ENCODE measurements at regions of chr3 and their contacts with region 1.

Region 1: GRCh38 chr3:189071441-189071840 is 100.3 kb upstream of the TPRG1 start:
- DNase-seq: peak; percentile 20
- ATAC-seq: peak; percentile 62
- H3K4me3 ChIP-seq: no peak overlapping the region
- H3K27ac ChIP-seq: no peak overlapping the region
- H3K4me1 ChIP-seq: no peaks in the 10 kb centered on the region
- H3K27me3 ChIP-seq: no peaks in the 10 kb centered on the region
- CTCF ChIP-seq: no peak

Region 2: DNA sequence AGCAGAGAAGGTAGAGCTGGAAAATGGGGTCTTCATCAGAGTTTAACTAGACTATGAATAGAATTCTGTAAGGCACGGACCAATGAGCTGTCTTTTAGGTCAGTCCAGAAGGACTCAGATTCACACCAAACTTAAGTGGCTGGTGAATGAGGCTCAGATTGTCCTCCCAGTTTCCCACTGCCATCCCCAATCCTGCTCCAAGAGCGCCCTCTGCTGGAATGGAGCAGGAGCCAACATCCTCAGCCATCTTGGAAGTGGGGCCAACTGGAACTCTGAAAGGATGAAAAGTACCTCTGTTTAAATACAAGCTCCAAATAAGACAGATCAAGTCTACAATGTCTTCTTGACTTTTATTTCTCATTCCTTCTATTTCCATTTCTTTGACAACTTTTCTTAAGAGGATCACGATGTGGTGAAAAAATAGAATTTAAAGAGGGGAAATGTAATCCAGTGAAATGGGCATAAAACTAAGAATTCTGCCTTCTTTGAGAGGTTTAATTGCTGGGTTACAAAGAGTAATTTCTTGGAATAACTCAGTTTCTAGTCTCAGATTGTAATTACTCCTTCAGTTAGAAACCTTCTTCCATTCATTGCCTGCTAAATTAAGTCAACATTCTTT is 116.7 kb before region 1 on chr3:
- CTCF ChIA-PET with region 1: no interaction called
- POLR2A ChIA-PET with region 1: no interaction called
- intact Hi-C with region 1: no loop called
- DNase-seq: peak; percentile 92
- ATAC-seq: peak; percentile 50; the same call in 1 of the 2 replicates
- H3K4me3 ChIP-seq: no peak overlapping the region
- H3K27ac ChIP-seq: no peak overlapping the region
- H3K4me1 ChIP-seq: peaks cover 20% of the 10 kb centered on the region
- H3K27me3 ChIP-seq: no peaks in the 10 kb centered on the region
- CTCF ChIP-seq: peak; percentile 98

Region 3: GRCh38 chr3:189108067-189108466 is 36.6 kb after region 1 on chr3:
- CTCF ChIA-PET with region 1: no interaction called
- POLR2A ChIA-PET with region 1: interaction called, 13 read pairs
- intact Hi-C with region 1: no loop called
- DNase-seq: no peak
- ATAC-seq: no peak
- H3K4me3 ChIP-seq: no peak overlapping the region
- H3K27ac ChIP-seq: no peak overlapping the region
- H3K4me1 ChIP-seq: no peaks in the 10 kb centered on the region
- H3K27me3 ChIP-seq: no peaks in the 10 kb centered on the region
- CTCF ChIP-seq: no peak

Measured in PC-3 (cell line).